ENCODE measurements at regions of chr12 and their contacts with region 1.

Region 1: DNA sequence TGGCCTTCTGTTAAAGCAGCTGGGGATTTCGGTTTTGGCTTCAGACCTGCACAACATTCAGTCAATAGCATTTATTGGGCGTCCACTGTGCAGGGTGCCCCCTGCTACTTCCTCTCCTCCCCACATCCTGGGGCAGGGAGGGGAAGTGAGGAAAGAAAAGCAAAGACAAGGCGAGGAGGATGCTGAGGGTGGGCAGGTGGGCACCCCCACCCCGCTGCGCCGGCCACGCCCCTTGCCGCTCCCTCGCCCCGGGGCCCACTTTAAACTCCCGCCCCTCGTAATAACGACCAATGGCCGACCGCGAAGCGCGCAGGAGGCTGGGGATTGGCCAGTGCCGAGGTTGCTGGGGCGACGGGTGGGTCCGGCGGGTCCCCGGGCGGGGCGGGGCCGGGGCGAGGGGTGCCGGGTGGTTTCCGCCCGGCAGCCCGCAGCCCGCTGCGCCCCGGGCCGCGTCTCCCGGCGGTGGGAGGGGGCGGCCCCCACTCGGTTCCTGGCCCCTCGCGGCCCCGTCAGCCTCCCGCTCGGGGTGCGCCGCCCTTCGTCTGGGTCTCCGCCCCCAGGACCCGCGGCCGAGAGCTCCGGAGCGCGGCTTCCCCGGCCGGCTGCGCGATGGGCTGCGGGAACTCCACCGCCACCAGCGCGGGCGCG is at the start of gene C12orf75:
- DNase-seq: peak; percentile 68
- ATAC-seq: peak; percentile 92
- H3K4me3 ChIP-seq: peak within 1 kb of the TSS; percentile 96
- H3K27ac ChIP-seq: peak within 1 kb of the TSS; percentile 91
- H3K4me1 ChIP-seq: peaks cover 18% of the 10 kb centered on the region
- H3K27me3 ChIP-seq: no peaks in the 10 kb centered on the region
- CTCF ChIP-seq: no peak
- POLR2A ChIP-seq: no peak
- RAD21 ChIP-seq: no peak
- total RNA-seq, gene C12orf75: 145 and 216 TPM in 2 replicates

Region 2: GRCh38 chr12:105177208-105177607 is 153.2 kb before region 1 on chr12:
- CTCF ChIA-PET with region 1: no interaction called
- POLR2A ChIA-PET with region 1: interaction called, 11 read pairs
- dilution Hi-C with region 1: no loop called
- in situ Hi-C with region 1: no loop called
- intact Hi-C with region 1: no loop called
- DNase-seq: no peak
- ATAC-seq: no peak
- H3K4me3 ChIP-seq: no peak overlapping the region
- H3K27ac ChIP-seq: no peak overlapping the region
- H3K4me1 ChIP-seq: no peaks in the 10 kb centered on the region
- H3K27me3 ChIP-seq: no peaks in the 10 kb centered on the region
- CTCF ChIP-seq: no peak
- POLR2A ChIP-seq: no peak
- RAD21 ChIP-seq: no peak

Region 3: DNA sequence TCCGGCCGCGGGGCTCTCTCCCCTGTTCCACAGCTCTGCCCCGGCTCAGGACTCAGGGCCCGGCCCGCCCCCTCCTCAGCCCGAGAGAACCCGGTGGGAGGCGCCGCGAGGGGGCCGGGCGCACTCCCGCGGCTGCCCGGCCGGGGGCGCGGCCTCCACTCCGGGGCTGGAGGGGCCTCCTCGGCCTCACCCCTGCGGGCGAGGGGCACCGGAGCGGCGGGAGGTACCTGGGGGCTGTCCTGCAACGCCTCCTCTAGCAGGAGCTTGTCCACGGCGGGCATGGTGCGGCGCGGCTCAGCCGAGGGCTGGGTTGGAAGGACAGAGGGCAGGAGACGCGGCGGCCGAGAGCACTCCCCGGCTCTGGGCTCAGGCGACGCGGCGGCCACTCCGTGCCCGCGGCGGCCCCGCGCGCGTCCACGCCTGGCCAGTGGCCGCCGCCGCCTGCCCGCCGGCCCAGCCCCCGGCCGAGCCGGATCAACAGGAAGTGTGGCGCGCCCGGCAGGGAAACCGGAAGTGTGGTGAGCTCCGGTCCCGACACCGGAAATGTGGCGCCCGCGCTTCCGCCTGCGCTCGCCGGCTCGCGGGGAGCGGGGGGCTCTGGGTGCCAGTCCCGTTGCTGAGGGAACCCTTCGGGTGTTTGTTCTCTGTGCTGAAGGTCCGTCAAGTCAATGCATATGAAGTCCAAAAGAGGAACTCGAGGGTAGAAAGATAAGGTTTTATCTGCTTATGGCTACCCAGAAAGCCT is 94.5 kb before region 1 on chr12 and contains the start of gene APPL2:
- CTCF ChIA-PET with region 1: no interaction called
- POLR2A ChIA-PET with region 1: no interaction called
- dilution Hi-C with region 1: no loop called
- in situ Hi-C with region 1: no loop called
- intact Hi-C with region 1: loop called (anchors 1 kb)
- DNase-seq: peak; percentile 87
- ATAC-seq: peak; percentile 94
- H3K4me3 ChIP-seq: peak within 1 kb of the TSS; percentile 93
- H3K27ac ChIP-seq: peak within 1 kb of the TSS; percentile 95
- H3K4me1 ChIP-seq: peaks cover 9% of the 10 kb centered on the region
- H3K27me3 ChIP-seq: no peaks in the 10 kb centered on the region
- CTCF ChIP-seq: peak; percentile 45
- POLR2A ChIP-seq: peak; percentile 79; the same call in 1 of the 2 replicates
- RAD21 ChIP-seq: peak; percentile 28
- total RNA-seq, gene APPL2: 42.3 and 53.3 TPM in 2 replicates

Region 4: GRCh38 chr12:105369014-105369413 is 38.6 kb after region 1 on chr12:
- CTCF ChIA-PET with region 1: interaction called, 3 read pairs
- POLR2A ChIA-PET with region 1: no interaction called
- dilution Hi-C with region 1: no loop called
- in situ Hi-C with region 1: no loop called
- intact Hi-C with region 1: loop called (anchors 5 kb)
- DNase-seq: peak; percentile 84
- ATAC-seq: peak; percentile 92
- H3K4me3 ChIP-seq: no peak overlapping the region
- H3K27ac ChIP-seq: no peak overlapping the region
- H3K4me1 ChIP-seq: peaks cover 4% of the 10 kb centered on the region; the same call in 1 of the 2 replicates
- H3K27me3 ChIP-seq: no peaks in the 10 kb centered on the region
- CTCF ChIP-seq: peak; percentile 46
- POLR2A ChIP-seq: no peak
- RAD21 ChIP-seq: peak; percentile 62

Region 5: DNA sequence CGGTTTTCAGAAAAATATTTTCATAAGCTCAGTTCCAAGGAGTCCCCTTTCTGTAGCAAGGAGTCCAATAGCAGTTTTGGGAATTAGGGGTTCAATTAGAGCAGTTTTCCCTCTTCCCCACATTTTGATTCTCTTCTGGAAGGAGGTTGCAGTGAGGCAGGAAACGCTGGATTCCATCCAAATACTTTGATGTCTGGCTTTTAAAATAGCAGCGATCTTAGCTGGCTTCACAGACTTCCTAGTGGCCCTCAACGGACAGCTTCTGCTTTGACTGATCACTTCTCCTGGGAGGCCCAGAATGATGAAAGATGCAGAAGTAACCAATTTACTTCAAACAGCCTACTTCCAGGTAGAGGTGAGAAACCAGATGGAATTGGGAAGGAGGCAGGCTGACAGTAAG is 63.2 kb after region 1 on chr12:
- CTCF ChIA-PET with region 1: no interaction called
- POLR2A ChIA-PET with region 1: no interaction called
- dilution Hi-C with region 1: no loop called
- in situ Hi-C with region 1: no loop called
- intact Hi-C with region 1: no loop called
- DNase-seq: peak; percentile 40
- ATAC-seq: peak; percentile 48
- H3K4me3 ChIP-seq: no peak overlapping the region
- H3K27ac ChIP-seq: no peak overlapping the region
- H3K4me1 ChIP-seq: no peaks in the 10 kb centered on the region; the same call in 1 of the 2 replicates
- H3K27me3 ChIP-seq: no peaks in the 10 kb centered on the region
- CTCF ChIP-seq: no peak
- POLR2A ChIP-seq: no peak
- RAD21 ChIP-seq: no peak